PC-3 (cell line): ENCODE measurements at regions of chr10 and their contacts with region 1.

Region 1: DNA sequence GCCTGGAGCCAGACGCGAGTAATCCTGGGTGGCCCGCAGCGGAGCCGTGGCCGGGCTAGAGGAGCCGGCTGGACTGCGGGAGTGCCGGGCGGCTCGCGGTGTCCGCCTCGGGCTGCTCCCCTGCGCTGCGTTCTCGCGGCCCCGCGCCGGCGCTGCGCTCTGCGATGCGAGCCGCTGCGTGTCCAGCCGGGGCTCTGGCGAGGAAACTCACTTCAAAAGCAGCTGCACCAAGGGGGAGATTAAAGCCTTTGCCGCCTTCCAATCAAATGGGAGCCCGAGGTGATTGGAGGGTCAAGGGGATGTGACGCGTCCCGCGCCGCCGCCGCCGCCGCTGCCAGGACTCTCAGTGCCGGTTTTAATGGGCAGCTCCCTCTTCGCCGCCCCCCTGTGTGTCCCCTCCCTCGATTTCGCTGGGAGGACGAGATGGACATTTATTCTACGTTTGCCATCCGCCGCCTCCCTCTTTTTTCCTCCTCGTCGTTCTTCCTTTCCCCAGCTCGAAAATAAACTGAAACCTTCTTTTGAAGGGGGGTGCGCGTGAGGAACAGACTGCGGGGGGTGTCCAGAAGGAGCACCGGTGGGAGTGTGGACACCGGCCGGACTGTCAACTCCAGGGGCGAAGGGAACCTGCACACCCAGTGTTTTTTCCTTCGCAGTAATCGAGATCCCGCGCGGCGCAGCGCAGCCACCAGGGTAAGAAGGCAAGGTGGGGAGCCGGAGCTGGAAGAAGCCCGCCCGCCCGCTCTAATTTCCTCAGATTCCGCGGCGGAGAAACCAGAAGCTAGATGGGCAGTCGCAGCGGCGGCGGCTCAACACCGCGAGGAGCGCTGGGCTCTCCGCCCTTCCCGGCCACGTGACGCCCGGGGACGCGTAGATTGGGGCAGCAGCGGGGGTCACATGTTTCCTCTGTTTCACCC is at the start of gene ZNF503:
- DNase-seq: peak; percentile 100
- ATAC-seq: peak; percentile 39
- H3K4me3 ChIP-seq: peak within 1 kb of the TSS; percentile 79
- H3K27ac ChIP-seq: peak within 1 kb of the TSS; percentile 81
- H3K4me1 ChIP-seq: peaks cover 15% of the 10 kb centered on the region
- H3K27me3 ChIP-seq: peaks cover 96% of the 10 kb centered on the region
- CTCF ChIP-seq: 0 out of 2 replicates have a peak, but pooled peaks have one; percentile 24
- total RNA-seq, gene ZNF503: 42.3 and 72.1 TPM in 2 replicates

Region 2: GRCh38 chr10:75187961-75188426 is 213.8 kb before region 1 on chr10:
- CTCF ChIA-PET with region 1: interaction called, 13 read pairs
- POLR2A ChIA-PET with region 1: no interaction called
- intact Hi-C with region 1: loop called (anchors 5 kb)
- DNase-seq: peak; percentile 99
- ATAC-seq: peak; percentile 64
- H3K4me3 ChIP-seq: no peak overlapping the region
- H3K27ac ChIP-seq: peak overlapping the region; percentile 6
- H3K4me1 ChIP-seq: peaks cover 31% of the 10 kb centered on the region
- H3K27me3 ChIP-seq: no peaks in the 10 kb centered on the region
- CTCF ChIP-seq: peak; percentile 98

Region 3: GRCh38 chr10:75651417-75651816 is 249.6 kb after region 1 on chr10:
- CTCF ChIA-PET with region 1: interaction called, 4 read pairs
- POLR2A ChIA-PET with region 1: interaction called, 3 read pairs
- intact Hi-C with region 1: loop called (anchors 1 kb)
- DNase-seq: peak; percentile 64
- ATAC-seq: no peak
- H3K4me3 ChIP-seq: no peak overlapping the region
- H3K27ac ChIP-seq: no peak overlapping the region
- H3K4me1 ChIP-seq: peaks cover 48% of the 10 kb centered on the region
- H3K27me3 ChIP-seq: peaks cover 9% of the 10 kb centered on the region; the same call in 1 of the 2 replicates
- CTCF ChIP-seq: peak; percentile 71

Region 4: GRCh38 chr10:75717126-75717916 is 315.5 kb after region 1 on chr10:
- CTCF ChIA-PET with region 1: no interaction called
- POLR2A ChIA-PET with region 1: no interaction called
- intact Hi-C with region 1: no loop called
- DNase-seq: peak; percentile 74
- ATAC-seq: peak; percentile 76
- H3K4me3 ChIP-seq: no peak overlapping the region
- H3K27ac ChIP-seq: no peak overlapping the region
- H3K4me1 ChIP-seq: peaks cover 7% of the 10 kb centered on the region; the same call in 1 of the 2 replicates
- H3K27me3 ChIP-seq: peaks cover 44% of the 10 kb centered on the region
- CTCF ChIP-seq: peak; percentile 47; the same call in 1 of the 2 replicates

Region 5: DNA sequence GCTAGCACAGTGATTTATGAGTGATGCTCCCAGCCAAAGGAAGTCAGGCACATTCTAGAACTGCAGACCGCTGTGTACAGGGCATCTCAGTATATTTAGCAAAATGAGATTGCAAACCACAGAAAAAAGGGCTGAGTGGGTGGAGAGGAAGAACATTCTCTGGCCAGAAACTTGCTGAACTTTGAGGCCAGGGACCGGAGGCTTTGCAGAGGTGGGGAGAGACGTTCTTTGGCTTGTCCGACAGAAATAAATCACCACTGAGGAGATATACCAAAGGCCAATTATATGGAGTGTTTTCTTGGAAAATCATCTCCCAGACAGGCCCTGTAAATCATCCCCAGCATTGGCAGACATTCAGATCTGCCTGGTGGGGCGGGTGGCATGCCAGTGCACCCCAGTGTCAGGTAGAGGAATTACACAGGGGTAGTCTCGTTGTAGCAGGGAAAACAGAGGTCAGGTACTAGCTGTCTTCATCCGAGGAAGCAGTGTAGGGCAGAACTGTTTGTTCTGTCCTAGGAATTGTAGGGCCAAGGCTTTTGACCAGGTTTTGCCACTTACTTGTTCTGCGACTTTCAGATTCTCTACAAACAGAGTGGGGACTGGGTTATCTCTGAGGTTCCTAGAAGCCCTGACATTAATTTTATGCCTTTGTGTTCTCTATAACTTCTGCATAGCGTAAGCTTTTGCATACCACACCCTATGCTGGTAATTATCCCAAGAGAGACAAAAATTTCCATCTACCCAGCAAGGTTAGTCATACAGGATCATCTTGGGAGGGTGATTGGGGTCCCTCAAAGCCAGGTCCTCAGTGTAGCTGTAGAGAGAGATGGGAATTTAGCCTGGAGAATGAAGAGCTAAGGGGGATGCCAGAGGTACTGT is 685.2 kb after region 1 on chr10:
- CTCF ChIA-PET with region 1: interaction called, 4 read pairs
- POLR2A ChIA-PET with region 1: no interaction called
- intact Hi-C with region 1: loop called (anchors 1 kb)
- DNase-seq: peak; percentile 98
- ATAC-seq: peak; percentile 84
- H3K4me3 ChIP-seq: no peak overlapping the region
- H3K27ac ChIP-seq: no peak overlapping the region
- H3K4me1 ChIP-seq: no peaks in the 10 kb centered on the region; the same call in 1 of the 2 replicates
- H3K27me3 ChIP-seq: peaks cover 47% of the 10 kb centered on the region
- CTCF ChIP-seq: peak; percentile 100

Region 6: DNA sequence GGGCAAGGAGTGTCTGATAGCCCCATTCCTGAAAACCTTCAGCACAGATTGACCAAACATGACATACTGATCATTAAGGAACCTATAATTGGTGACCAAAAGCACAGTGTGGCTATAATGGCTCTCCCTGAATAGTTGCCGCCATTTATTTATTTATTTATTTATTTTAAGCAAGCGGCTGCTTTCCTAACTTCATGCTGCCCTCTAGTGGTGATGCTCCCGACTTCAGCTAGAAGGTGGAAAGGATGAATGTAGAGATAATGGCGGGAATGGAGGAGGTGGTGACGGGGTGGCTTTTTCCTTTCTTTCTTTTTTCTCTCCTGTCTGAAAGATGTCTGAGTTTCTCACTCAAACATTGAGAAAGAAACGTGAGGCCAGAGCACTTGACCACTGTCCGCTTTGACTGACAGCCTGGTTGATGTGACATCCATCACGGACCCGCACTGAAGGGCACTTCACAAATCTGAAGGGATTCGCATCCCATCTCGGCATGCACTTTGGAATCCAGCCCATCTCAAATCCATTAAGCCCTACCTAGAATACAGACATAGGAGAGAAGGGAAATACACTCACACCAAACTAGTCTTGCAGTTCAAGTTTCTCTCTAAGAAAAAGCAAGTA is 1145.6 kb after region 1 on chr10:
- CTCF ChIA-PET with region 1: interaction called, 3 read pairs
- POLR2A ChIA-PET with region 1: no interaction called
- intact Hi-C with region 1: loop called (anchors 2 kb)
- DNase-seq: peak; percentile 100
- ATAC-seq: peak; percentile 85
- H3K4me3 ChIP-seq: peak overlapping the region; percentile 44
- H3K27ac ChIP-seq: no peak overlapping the region
- H3K4me1 ChIP-seq: peaks cover 5% of the 10 kb centered on the region
- H3K27me3 ChIP-seq: peaks cover 26% of the 10 kb centered on the region
- CTCF ChIP-seq: peak; percentile 100